ENCODE measurements at regions of chr20 and their contacts with region 1.

Region 1: GRCh38 chr20:1466211-1467081 is at the start of gene NSFL1C:
- DNase-seq: peak; percentile 95 to 100 (median 98)
- ATAC-seq: peak; percentile 98
- H3K4me3 ChIP-seq: peak within 1 kb of the TSS; percentile 59
- H3K4me3 Mint-ChIP-seq: peak within 1 kb of the TSS; percentile 81 to 90 (median 86)
- H3K27ac ChIP-seq: peak within 1 kb of the TSS; percentile 82
- H3K27ac Mint-ChIP-seq: peak within 1 kb of the TSS; percentile 35 to 90 (median 79)
- H3K4me1 ChIP-seq: peaks cover 19 to 29% of the 10 kb centered on the region in 2 donors
- H3K4me1 Mint-ChIP-seq: peaks cover 42 to 61% (median 48%) of the 10 kb centered on the region in 7 donors
- H3K27me3 ChIP-seq: no peaks in the 10 kb centered on the region
- H3K27me3 Mint-ChIP-seq: peaks cover 0 to 21% (median 6%) of the 10 kb centered on the region in 5 donors
- total RNA-seq, gene NSFL1C: 59.3 to 80.0 (median 64.7) TPM

Region 2: DNA sequence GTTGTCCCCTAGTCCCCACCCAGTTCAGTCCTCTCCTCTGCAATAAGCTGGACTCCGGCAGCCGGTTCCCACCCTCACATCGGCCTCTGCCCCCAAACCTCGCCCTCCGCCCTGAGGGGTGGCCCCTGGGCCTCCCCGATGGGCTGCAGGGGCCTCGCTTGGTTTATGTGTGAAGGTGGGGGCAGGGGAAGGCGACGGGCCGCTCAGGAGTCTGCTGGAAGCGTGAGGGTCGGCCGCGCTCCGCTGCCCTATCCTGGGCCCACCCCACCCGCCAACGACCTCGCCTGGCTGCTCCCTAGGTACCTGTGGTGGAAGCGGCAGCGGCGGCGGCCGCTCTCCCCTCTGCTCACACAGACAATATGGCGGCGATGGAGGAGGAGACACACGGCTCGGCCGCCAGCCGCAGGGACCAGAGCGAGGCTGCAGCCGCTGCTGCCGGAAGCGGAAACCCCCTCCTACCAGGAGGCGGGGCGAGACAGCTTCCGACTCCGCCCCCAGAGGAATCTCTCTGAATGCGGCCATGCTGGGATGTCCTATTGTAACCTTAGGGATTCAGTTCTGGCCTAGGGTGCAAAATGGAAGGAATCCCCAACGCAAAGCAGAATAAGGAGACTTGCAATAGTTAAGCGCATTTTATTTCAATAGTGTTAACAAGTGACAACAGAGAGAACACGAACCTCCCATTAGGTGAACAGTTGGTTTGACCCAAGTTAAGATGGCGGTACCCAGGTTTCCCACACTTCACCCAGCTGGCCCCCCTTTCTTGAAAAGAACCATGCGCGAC is 922.9 kb before region 1 on chr20 and contains the start of gene CSNK2A1:
- CTCF ChIA-PET with region 1: no interaction called
- POLR2A ChIA-PET with region 1: no interaction called
- intact Hi-C with region 1: loop called in 1 of 2 experiments (anchors 5 kb)
- DNase-seq: peak; percentile 93 to 99 (median 97)
- ATAC-seq: peak; percentile 97
- H3K4me3 ChIP-seq: peak within 1 kb of the TSS; percentile 59
- H3K4me3 Mint-ChIP-seq: peak within 1 kb of the TSS; percentile 86 to 100 (median 91)
- H3K27ac ChIP-seq: peak within 1 kb of the TSS; percentile 94
- H3K27ac Mint-ChIP-seq: peak within 1 kb of the TSS; percentile 97 to 100 (median 98)
- H3K4me1 ChIP-seq: peaks cover 17 to 39% of the 10 kb centered on the region in 2 donors
- H3K4me1 Mint-ChIP-seq: peaks cover 40 to 58% (median 54%) of the 10 kb centered on the region in 7 donors
- H3K27me3 ChIP-seq: no peaks in the 10 kb centered on the region
- H3K27me3 Mint-ChIP-seq: peaks cover 0 to 9% (median 5%) of the 10 kb centered on the region in 5 donors
- total RNA-seq, gene CSNK2A1: 69.7 to 117 (median 90.8) TPM

Region 3: GRCh38 chr20:1225783-1226654 is 240.4 kb before region 1 on chr20 and contains the start of gene RAD21L1:
- CTCF ChIA-PET with region 1: no interaction called
- POLR2A ChIA-PET with region 1: interaction called, 3 read pairs
- intact Hi-C with region 1: loop called (anchors 1 to 2 kb)
- DNase-seq: peak; percentile 55 to 83 (median 66)
- ATAC-seq: peak; percentile 96
- H3K4me3 ChIP-seq: peak within 1 kb of the TSS; percentile 76
- H3K4me3 Mint-ChIP-seq: peak within 1 kb of the TSS; percentile 82 to 92 (median 87)
- H3K27ac ChIP-seq: peak within 1 kb of the TSS; percentile 73
- H3K27ac Mint-ChIP-seq: peak within 1 kb of the TSS in 8 of 9 donors; percentile 34 to 90 (median 81)
- H3K4me1 ChIP-seq: peaks cover 8 to 12% of the 10 kb centered on the region in 2 donors
- H3K4me1 Mint-ChIP-seq: peaks cover 0 to 21% (median 14%) of the 10 kb centered on the region in 7 donors
- H3K27me3 ChIP-seq: peaks cover 0 to 11% of the 10 kb centered on the region in 2 donors
- H3K27me3 Mint-ChIP-seq: peaks cover 0 to 65% (median 16%) of the 10 kb centered on the region in 5 donors
- total RNA-seq, gene RAD21L1: 0.58 to 0.81 (median 0.64) TPM in 3 of 5 experiments, not detected in the others

Region 4: DNA sequence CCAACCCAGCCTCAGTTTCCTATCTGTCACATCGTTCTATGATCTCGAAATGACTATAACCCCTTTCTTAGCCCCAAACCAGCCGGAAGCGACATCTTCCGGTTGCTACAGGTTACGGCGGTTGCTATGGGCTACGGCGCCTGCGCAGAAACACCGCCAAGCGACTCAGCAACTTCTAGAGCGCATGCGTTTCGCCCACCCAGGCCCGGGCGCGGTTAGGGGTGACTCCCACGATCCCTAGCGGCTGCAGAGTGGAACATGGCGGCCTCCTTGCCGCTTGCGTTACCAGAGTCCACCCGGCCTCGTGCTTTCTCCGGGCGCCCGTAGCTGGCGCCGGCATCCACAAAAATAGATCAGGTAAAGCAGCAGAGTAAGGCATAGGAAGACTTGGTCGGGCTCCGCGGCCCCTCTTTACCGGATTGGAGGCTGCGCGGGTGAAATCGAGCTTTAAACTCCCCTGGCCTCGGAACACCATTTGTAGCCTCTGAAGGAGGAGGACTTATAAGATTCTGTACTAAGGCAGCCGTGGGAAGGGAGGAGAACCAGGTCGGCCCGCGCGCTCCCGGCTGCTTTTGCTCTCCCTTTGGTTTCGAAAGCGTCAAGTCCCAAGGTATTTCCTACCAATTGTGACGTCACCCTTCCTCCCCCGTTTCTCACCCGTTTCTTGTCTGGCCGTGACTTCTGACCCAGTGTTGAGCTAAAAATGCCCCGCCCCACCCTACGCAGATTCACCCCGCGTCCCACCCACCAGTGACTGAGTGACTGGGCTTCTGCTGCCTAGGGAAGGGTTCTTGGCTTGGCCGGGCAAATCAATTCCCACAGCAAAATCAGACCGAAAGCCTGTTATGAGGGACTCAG is 141.0 kb before region 1 on chr20:
- CTCF ChIA-PET with region 1: no interaction called
- POLR2A ChIA-PET with region 1: interaction called, 6 read pairs
- intact Hi-C with region 1: loop called (anchors 1 kb)
- DNase-seq: peak; percentile 96 to 99 (median 98)
- ATAC-seq: peak; percentile 92
- H3K4me3 ChIP-seq: peak overlapping the region; percentile 95
- H3K4me3 Mint-ChIP-seq: no peak overlapping the region
- H3K27ac ChIP-seq: peak overlapping the region; percentile 97
- H3K27ac Mint-ChIP-seq: no peak overlapping the region
- H3K4me1 ChIP-seq: peaks cover 18 to 25% of the 10 kb centered on the region in 2 donors
- H3K4me1 Mint-ChIP-seq: peaks cover 0 to 31% (median 14%) of the 10 kb centered on the region in 7 donors
- H3K27me3 ChIP-seq: no peaks in the 10 kb centered on the region
- H3K27me3 Mint-ChIP-seq: no peaks in the 10 kb centered on the region

Region 5: DNA sequence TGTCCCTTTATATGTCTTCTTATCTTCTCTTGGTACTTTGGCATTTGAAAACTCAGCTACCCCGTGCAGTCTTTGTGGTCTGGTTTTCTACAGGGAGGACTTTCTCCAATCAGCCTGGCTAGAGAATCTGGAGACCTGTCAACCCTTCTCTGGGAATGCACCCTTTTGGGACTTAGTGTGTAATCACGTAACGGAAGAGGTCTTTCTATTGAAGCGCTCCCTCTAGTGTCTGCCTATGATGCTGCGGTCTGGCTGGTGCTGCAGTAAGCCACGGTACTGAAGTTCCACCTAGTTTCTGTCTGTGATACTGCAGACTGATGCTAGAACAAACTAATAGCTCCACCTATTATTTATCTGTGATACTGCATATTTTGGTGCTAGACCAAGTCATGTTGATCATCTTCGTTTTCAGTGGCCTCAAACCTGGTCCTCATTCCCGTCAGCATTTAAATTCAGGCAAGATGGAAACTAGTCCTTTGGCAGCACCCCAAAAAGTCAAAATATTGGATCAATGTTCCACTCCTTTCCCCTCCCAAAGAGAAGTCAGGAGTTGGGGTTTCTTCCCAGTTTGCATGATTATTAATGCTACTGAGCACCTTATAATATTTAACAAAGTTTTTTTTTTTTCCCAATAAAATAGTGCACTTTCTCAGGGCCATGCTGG is 37.2 kb after region 1 on chr20:
- CTCF ChIA-PET with region 1: interaction called, 7 read pairs
- POLR2A ChIA-PET with region 1: no interaction called
- intact Hi-C with region 1: loop called (anchors 1 kb)
- DNase-seq: peak; percentile 31 to 81 (median 78)
- ATAC-seq: peak; percentile 100
- H3K4me3 ChIP-seq: no peak overlapping the region
- H3K4me3 Mint-ChIP-seq: peak overlapping the region in 1 of 10 donors; percentile 51
- H3K27ac ChIP-seq: no peak overlapping the region
- H3K27ac Mint-ChIP-seq: peak overlapping the region in 4 of 9 donors; percentile 3 to 75 (median 20)
- H3K4me1 ChIP-seq: no peaks in the 10 kb centered on the region
- H3K4me1 Mint-ChIP-seq: peaks cover 3 to 8% (median 4%) of the 10 kb centered on the region in 7 donors
- H3K27me3 ChIP-seq: peaks cover 0 to 6% of the 10 kb centered on the region in 2 donors
- H3K27me3 Mint-ChIP-seq: peaks cover 9 to 61% (median 31%) of the 10 kb centered on the region in 5 donors

Region 6: DNA sequence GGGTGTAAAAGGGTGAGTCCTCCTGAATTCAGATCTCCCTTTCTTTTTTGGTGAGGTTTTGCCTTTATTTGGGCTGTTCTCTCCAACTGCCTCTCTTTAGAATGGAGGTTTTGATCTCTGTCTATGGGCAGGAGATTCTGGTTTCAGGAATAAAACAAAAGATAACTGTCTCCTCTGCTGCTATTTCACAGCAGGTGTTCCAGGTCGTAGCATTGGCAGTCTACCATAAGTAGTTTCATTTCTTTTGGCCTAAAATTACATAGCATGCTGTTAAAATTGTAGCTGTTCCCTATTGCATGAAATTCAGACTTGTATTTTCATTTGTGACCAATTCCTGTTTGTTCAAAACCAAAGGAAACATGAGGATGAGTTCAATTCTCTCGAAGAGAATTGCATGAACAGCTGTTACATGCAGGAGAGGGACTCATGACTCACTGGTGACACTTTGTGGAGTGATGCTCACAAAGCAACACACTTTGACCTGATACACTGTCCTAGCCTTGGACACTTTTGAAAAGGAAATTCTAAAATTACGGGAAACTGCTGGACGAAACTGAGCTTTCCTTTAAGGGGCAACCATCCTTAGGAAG is 267.9 kb after region 1 on chr20:
- CTCF ChIA-PET with region 1: interaction called, 5 read pairs
- POLR2A ChIA-PET with region 1: no interaction called
- intact Hi-C with region 1: loop called in 1 of 2 experiments (anchors 1 kb)
- DNase-seq: peak in 6 of 9 donors; percentile 17 to 56 (median 46)
- ATAC-seq: peak; percentile 82
- H3K4me3 ChIP-seq: no peak overlapping the region
- H3K4me3 Mint-ChIP-seq: peak overlapping the region in 6 of 10 donors; percentile 23 to 57 (median 40)
- H3K27ac ChIP-seq: no peak overlapping the region
- H3K27ac Mint-ChIP-seq: peak overlapping the region in 6 of 9 donors; percentile 28 to 75 (median 62)
- H3K4me1 ChIP-seq: peaks cover 0 to 29% of the 10 kb centered on the region in 2 donors
- H3K4me1 Mint-ChIP-seq: peaks cover 0 to 36% (median 11%) of the 10 kb centered on the region in 7 donors
- H3K27me3 ChIP-seq: no peaks in the 10 kb centered on the region
- H3K27me3 Mint-ChIP-seq: peaks cover 0 to 9% (median 4%) of the 10 kb centered on the region in 5 donors

Measured in naive thymus-derived CD4-positive, alpha-beta T cell (primary cell).